GM12878 (cell line): ENCODE measurements at regions of chr5 and their contacts with region 1.

Region 1: DNA sequence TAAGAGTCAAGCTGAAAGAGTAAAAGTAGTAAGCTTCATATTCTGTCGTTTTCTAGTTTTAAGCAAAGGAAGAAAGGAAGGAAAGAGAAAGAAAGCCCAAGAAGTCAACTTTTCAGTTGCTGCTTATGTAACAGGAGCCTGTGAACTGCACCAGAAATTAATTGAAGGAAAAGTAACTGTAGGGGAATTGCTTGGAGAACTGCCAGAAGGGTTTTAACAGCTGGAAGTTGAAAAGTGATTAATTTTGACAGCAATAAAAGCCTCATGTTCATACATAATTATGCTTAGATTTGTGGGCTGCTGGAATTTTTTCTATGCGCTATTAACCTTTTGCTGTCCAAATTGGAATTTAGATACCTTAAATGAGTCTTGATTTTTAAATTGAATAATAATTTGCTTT is 255.7 kb downstream of the ENC1 start:
- DNase-seq: no peak
- ATAC-seq: no peak
- H3K4me3 ChIP-seq: no peak overlapping the region
- H3K27ac ChIP-seq: no peak overlapping the region
- H3K4me1 ChIP-seq: no peaks in the 10 kb centered on the region
- H3K27me3 ChIP-seq: no peaks in the 10 kb centered on the region
- CTCF ChIP-seq: no peak
- EP300 ChIP-seq: no peak
- POLR2A ChIP-seq: no peak
- RAD21 ChIP-seq: no peak

Region 2: DNA sequence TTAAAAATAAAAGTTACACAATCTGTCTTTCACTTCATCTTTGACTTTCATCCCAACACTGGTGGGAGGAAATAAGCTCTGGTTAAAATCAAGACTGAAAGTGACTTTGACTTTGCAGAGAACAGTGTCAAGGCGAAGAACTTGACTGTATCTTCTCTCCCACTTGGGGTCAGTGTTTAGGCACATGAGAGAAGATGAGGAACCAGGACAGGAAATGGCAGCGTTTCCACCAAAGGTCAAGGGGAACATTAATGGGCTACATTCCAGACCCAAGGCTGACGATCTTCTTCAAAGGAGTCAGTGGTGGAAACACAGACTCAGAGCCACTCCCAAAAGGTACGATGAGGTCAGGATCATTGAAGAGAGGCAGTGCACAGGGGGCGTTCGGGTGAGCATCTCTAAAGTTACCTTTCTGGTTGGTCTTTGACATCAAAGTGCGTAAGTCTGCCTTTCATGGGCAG is 349.3 kb before region 1 on chr5:
- CTCF ChIA-PET with region 1: no interaction called
- POLR2A ChIA-PET with region 1: no interaction called
- RAD21 ChIA-PET with region 1: no interaction called
- SMC1A ChIA-PET with region 1: no interaction called
- in situ Hi-C with region 1: no loop called
- intact Hi-C with region 1: loop called (anchors 5 kb)
- DNase-seq: peak; percentile 59
- ATAC-seq: peak; percentile 97
- H3K4me3 ChIP-seq: no peak overlapping the region
- H3K27ac ChIP-seq: no peak overlapping the region
- H3K4me1 ChIP-seq: peaks cover 8% of the 10 kb centered on the region; the same call in 1 of the 2 replicates
- H3K27me3 ChIP-seq: no peaks in the 10 kb centered on the region
- CTCF ChIP-seq: peak; percentile 56 to 71 (median 70)
- EP300 ChIP-seq: no peak
- POLR2A ChIP-seq: no peak
- RAD21 ChIP-seq: peak; percentile 82